ENCODE measurements at regions of chr2 and their contacts with region 1.

Region 1: DNA sequence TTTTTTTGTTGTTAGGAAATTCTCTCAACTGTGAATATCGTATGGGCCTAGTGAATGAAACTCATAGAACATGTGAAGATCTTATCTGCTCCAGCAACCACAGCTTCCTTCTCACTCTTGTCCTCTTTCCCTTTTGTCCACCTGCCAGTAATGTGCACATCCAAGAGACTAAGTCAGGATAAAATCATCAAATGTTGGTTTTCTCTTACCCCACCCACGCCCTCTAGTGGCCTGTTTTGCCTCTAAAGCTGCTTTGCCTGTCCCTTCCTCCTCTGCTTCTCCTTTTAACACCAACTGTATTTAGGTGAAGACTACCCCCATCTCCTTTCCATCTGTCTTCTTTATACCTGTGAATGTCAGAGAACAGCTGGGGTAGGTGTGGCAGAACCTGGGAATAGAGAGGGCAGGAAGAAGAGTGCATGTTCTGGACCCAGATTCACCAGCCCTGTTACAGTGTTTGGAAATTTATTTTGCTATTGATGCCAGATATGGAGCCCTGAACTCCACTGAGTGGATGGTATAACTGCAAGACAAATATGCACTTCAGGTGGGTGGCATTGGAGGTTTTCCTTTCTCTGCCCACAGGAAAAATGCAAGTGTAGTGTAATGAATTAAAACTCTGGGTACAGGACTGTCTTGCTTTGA is 8.4 kb upstream of the MGAT5 start:
- DNase-seq: peak; percentile 88
- ATAC-seq: peak; percentile 63
- H3K4me3 Mint-ChIP-seq: peak overlapping the region; percentile 5
- H3K27ac Mint-ChIP-seq: peak overlapping the region; percentile 33
- H3K4me1 Mint-ChIP-seq: peaks cover 79% of the 10 kb centered on the region
- H3K27me3 Mint-ChIP-seq: no peaks in the 10 kb centered on the region

Region 2: DNA sequence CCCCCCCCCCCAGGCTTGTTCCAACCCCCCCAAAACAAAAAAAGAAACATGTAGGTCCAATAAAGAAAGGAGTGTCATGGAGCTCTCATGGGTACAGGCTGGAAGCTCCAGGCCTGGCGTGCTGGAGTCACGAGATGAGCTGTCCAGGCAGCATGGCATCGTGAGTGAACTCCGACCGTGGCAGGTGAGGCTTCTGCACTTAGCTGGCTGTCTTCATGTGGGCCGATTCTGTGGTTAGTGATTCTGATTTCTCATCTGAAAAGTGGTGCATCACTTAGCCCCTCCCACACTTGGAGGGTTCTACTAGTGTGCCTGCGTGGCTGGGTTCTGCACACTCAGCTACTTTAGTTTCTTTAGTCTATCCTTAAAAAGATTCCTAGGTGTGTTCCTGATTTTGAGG is 118.0 kb before region 1 on chr2:
- CTCF ChIA-PET with region 1: interaction called, 14 read pairs
- POLR2A ChIA-PET with region 1: no interaction called
- DNase-seq: peak; percentile 66
- ATAC-seq: peak; percentile 85
- H3K4me3 Mint-ChIP-seq: no peak overlapping the region
- H3K27ac Mint-ChIP-seq: no peak overlapping the region
- H3K4me1 Mint-ChIP-seq: peaks cover 62% of the 10 kb centered on the region
- H3K27me3 Mint-ChIP-seq: no peaks in the 10 kb centered on the region

Region 3: DNA sequence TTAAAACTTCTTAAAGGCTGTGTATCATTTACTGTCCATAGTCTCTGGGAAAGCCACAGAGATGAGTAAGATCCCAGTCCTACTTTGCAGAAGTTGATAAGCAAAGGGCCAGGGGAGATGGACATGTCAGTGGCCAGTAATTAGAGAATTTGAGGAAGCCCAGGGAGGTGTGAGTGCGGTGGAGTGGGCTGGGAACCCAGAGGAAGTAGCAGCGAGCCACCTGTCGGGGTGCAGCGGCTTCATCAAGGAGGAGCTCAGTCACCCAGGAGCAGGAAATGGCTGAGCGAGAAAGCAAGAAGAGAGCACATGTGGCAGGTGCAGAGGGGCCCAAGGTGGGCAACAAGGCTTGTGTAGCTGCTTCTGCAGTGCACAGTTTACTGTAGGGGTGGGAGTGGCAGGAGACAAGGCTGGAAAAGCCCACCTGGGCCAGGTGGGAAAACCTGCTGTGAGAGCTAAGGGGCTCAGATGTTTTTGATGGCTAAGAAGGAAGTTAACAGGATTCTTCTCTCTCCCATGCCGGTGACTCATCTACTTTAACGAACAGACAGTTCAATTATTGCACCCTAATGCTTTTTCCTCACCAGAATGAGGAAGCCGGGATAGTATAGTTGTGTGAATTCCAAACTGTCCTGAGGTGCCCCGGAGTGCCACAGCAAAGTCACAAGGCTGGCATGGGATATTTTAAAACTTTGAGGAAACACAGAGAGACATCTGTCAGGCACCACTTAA is 26.4 kb before region 1 on chr2:
- CTCF ChIA-PET with region 1: interaction called, 28 read pairs
- POLR2A ChIA-PET with region 1: no interaction called
- DNase-seq: peak; percentile 65
- ATAC-seq: peak; percentile 78
- H3K4me3 Mint-ChIP-seq: peak overlapping the region; percentile 40
- H3K27ac Mint-ChIP-seq: peak overlapping the region; percentile 85
- H3K4me1 Mint-ChIP-seq: peaks cover 49% of the 10 kb centered on the region
- H3K27me3 Mint-ChIP-seq: no peaks in the 10 kb centered on the region

Region 4: GRCh38 chr2:134261398-134262131 is 16.1 kb after region 1 on chr2:
- CTCF ChIA-PET with region 1: interaction called, 27 read pairs
- POLR2A ChIA-PET with region 1: no interaction called
- DNase-seq: no peak
- ATAC-seq: no peak
- H3K4me3 Mint-ChIP-seq: no peak overlapping the region
- H3K27ac Mint-ChIP-seq: peak overlapping the region; percentile 63
- H3K4me1 Mint-ChIP-seq: peaks cover 78% of the 10 kb centered on the region
- H3K27me3 Mint-ChIP-seq: no peaks in the 10 kb centered on the region

Region 5: DNA sequence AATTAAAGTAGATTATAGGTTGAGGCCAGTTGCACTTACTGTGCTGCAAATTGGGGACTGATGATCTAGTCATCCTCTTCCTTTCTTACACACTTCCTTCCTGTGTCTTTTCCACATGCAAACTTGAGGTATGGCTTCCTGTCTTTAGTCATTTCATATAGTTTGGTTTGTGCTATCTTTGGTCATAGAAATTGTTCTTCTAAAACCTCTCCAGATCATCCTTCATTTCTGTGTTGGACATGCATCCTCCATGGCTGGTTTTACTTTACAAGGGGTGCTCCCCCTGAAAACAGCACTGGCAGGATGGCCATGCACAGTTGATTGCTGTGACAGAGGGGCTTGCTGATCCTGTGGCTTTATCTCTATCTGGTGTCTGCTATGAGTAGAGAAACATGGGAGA is 44.9 kb after region 1 on chr2:
- CTCF ChIA-PET with region 1: interaction called, 20 read pairs
- POLR2A ChIA-PET with region 1: no interaction called
- DNase-seq: peak; percentile 46
- ATAC-seq: peak; percentile 68
- H3K4me3 Mint-ChIP-seq: no peak overlapping the region
- H3K27ac Mint-ChIP-seq: no peak overlapping the region
- H3K4me1 Mint-ChIP-seq: peaks cover 20% of the 10 kb centered on the region
- H3K27me3 Mint-ChIP-seq: no peaks in the 10 kb centered on the region

Region 6: DNA sequence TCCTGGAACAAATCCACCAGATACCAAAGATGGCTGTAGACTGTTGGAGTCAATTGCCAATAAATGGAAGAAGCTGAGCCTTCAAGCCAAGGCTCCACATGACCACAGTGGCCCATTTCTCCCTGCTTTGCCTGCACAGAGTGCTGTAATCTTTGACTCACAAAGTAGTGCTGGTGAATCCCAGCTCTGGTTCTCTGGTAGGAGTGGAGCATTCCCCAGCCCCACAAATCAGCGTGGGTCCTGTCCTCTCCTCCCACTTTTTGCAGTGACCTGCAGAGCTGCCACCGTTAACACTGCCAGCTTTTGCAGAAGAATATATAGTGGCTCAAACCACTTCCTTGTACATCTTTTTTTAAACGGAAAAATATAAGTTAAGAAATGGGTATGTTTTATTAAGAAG is 102.3 kb after region 1 on chr2:
- CTCF ChIA-PET with region 1: no interaction called
- POLR2A ChIA-PET with region 1: no interaction called
- DNase-seq: no peak
- ATAC-seq: no peak
- H3K4me3 Mint-ChIP-seq: no peak overlapping the region
- H3K27ac Mint-ChIP-seq: no peak overlapping the region
- H3K4me1 Mint-ChIP-seq: peaks cover 7% of the 10 kb centered on the region
- H3K27me3 Mint-ChIP-seq: no peaks in the 10 kb centered on the region